ENCODE measurements at regions of chr6 and their contacts with region 1.

Region 1: DNA sequence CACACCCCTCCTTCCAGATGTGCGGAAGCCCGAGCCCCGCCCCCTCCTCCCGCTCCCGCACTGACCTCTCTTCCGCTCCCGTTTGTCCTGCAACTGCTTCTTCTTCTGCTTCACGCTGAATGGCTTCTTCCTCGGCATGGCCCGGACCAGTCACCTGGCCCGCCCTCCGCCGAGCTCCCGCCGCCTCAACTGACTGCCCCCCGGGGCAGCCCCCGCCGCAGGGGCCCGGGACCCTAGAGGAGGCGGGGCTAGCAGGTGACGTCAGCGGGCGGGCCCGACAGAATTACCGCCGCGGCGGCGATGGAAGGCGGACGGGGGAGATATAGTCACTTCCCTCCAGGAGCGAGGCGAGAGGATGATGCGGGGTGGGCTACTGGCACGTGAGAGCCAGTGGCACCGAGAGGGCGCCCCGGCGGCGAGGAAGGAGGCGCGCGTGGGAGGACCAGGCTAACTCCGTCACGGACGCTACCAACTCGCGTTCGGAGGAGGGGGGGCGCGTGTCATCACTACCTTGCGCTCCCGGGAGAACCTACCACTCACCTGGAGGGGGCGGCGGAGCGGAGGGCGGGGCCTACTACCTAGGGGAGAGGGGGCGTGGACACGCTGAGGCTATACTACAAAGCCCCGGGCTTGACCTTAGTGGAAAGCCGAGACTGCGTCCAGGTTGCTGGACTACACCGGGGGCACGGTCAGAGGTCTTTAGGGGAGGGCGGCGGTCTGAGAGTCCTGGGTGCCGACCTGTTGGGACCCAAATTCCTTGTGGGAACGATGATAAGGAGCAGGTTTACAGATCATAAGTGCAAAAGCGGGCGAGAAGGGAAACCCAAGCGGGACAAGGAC is at the start of gene GNL1:
- DNase-seq: peak; percentile 98
- H3K27ac ChIP-seq: peak within 1 kb of the TSS; percentile 95
- CTCF ChIP-seq: no peak

Region 2: DNA sequence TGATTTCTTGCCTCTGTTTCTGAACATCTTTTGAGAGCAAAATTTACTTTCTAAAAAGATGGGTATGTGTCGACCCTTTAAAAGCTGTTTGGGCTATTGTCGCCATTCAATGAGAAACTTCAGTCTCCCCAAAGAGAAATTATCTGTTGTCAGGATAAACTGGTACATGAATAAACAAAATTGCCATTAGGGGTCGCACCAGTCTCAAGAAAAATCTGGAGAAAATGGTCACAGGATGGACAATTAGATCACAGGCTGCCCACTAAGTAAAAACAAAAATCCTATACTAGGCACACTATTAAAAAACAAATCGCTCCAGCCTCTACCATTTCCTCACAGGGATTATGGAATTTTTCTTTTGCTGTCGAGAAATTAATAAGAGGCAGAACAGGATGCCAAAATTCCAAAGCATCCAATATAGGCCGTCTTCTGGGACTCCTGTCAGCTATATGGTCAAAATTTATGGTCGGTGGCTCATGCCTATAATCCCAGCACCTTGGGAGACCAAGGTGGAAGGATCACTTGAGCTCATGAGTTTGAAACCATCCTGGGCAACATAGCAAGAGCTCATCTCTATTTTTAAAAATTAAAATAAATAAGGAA is 72.5 kb before region 1 on chr6:
- CTCF ChIA-PET with region 1: interaction called, 10 read pairs
- POLR2A ChIA-PET with region 1: no interaction called
- DNase-seq: no peak
- H3K27ac ChIP-seq: no peak overlapping the region
- CTCF ChIP-seq: peak; percentile 49; the same call in 1 of the 2 replicates

Region 3: DNA sequence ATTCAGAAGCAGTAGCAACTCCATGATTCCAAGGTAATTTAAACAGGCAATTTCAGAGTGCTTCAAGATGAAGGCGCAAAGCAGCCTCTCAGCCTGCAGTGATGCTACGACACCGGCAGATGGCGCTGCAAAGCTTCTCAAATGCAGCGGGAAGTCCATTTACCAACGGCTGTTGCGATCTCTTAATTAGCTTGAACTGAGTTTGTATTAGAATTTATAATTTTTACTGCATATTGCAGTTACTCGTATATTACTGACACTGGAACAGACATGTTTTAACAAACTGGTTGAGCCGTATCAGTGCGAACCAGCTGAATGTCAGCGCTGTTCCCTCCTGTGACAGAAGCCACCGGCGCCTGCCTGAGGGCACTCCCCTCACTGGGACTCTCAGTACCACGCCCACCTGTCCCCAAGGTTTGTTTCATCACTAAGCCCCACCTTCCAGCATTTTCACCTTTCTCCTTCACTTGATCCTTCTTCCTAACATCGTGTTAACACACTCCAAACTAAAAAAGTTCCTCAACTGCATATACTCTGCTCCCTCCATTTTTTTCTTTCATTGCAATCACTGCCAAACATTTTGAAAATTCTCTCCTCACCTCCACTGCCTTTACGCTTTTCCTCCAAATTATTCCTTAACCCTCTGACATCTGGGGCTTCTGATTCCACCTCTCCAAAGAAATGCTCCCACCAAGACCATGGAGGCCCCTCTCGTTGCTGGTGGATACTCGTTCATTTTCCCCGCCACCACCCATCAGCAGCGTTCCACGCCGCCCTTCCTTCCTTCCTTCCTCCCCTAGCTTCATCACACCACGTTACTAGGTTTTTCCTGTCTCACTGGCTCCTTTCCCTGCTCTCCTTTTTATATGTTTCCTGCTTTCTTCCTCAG is 14.5 kb before region 1 on chr6:
- CTCF ChIA-PET with region 1: interaction called, 24 read pairs
- POLR2A ChIA-PET with region 1: no interaction called
- DNase-seq: peak; percentile 62
- H3K27ac ChIP-seq: no peak overlapping the region
- CTCF ChIP-seq: peak; percentile 97

Measured in RWPE1 (cell line).